ENCODE measurements at regions of chr16 and their contacts with region 1.

Region 1: GRCh38 chr16:88700636-88701482 is 5.3 kb downstream of the RNF166 start:
- DNase-seq: peak; percentile 92 to 98 (median 97)
- ATAC-seq: peak; percentile 65
- H3K4me3 ChIP-seq: peak overlapping the region; percentile 74 to 95
- H3K4me3 Mint-ChIP-seq: peak overlapping the region; percentile 90
- H3K27ac ChIP-seq: peak overlapping the region; percentile 83 to 91
- H3K27ac Mint-ChIP-seq: peak overlapping the region; percentile 98
- H3K4me1 ChIP-seq: peaks cover 56% of the 10 kb centered on the region
- H3K4me1 Mint-ChIP-seq: peaks cover 61% of the 10 kb centered on the region
- H3K27me3 ChIP-seq: no peaks in the 10 kb centered on the region
- H3K27me3 Mint-ChIP-seq: no peaks in the 10 kb centered on the region
- CTCF ChIP-seq: no peak

Region 2: DNA sequence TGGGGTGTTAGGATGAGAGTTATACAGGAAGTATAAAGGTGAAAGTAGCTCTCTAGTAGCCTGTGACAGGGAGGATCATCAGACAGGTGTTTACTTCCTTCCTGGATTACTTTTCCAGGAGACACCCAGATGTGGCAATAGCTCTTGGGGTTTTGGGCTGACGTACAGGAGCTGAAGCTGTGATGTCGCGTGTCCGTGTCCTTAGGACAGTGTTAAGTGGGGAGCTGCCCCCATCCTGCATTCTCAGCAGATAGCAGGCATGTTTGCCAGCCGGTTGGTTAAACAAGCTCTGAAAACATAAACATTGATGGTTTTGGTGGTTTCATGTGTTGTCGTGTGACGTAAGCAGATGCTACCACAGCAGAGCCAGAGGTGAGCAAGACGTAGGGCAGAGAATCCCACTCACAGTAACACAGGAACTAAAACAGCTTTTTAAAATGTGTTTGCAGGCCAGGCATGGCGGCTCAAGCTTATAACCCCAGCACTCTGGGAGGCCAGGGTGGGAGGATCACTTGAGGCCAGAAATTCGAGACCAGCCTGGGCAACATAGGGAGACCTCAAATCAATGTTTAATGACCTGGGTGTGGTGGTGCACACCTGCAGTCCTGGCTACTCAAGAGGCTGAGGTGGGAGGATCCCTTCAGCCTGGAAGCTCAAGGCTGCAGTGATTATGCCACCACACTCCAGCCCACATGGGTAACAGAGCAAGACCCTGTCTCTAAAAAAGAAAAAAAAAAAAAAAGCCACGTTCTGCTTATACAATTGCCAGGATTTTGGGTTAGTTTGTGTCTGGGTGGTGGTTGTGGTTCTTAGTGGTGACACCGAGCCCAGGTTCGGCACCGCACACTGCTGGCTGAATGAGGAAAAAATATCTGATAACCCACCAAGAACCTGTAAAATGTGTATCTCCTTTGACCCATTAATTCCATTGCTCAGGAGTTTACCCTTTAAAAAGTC is 80.7 kb before region 1 on chr16:
- CTCF ChIA-PET with region 1: no interaction called
- POLR2A ChIA-PET with region 1: interaction called, 11 read pairs
- intact Hi-C with region 1: loop called (anchors 1 kb)
- DNase-seq: peak; percentile 58 to 97 (median 76)
- ATAC-seq: peak; percentile 85
- H3K4me3 ChIP-seq: no peak overlapping the region
- H3K4me3 Mint-ChIP-seq: peak overlapping the region; percentile 36
- H3K27ac ChIP-seq: peak overlapping the region; percentile 69 to 89
- H3K27ac Mint-ChIP-seq: peak overlapping the region; percentile 99
- H3K4me1 ChIP-seq: peaks cover 28% of the 10 kb centered on the region
- H3K4me1 Mint-ChIP-seq: peaks cover 25% of the 10 kb centered on the region
- H3K27me3 ChIP-seq: no peaks in the 10 kb centered on the region
- H3K27me3 Mint-ChIP-seq: no peaks in the 10 kb centered on the region
- CTCF ChIP-seq: no peak

Region 3: GRCh38 chr16:88650749-88651275 is 50.0 kb before region 1 on chr16 and contains the start of gene CYBA:
- CTCF ChIA-PET with region 1: interaction called, 5 read pairs
- POLR2A ChIA-PET with region 1: interaction called, 7 read pairs
- intact Hi-C with region 1: loop called (anchors 1 kb)
- DNase-seq: peak; percentile 73 to 92 (median 82)
- ATAC-seq: peak; percentile 80
- H3K4me3 ChIP-seq: peak within 1 kb of the TSS; percentile 90 to 95
- H3K4me3 Mint-ChIP-seq: peak within 1 kb of the TSS; percentile 91
- H3K27ac ChIP-seq: peak within 1 kb of the TSS; percentile 91 to 94
- H3K27ac Mint-ChIP-seq: peak within 1 kb of the TSS; percentile 94
- H3K4me1 ChIP-seq: peaks cover 33% of the 10 kb centered on the region
- H3K4me1 Mint-ChIP-seq: peaks cover 21% of the 10 kb centered on the region
- H3K27me3 ChIP-seq: no peaks in the 10 kb centered on the region
- H3K27me3 Mint-ChIP-seq: no peaks in the 10 kb centered on the region
- CTCF ChIP-seq: no peak
- total RNA-seq, gene CYBA: 312 to 320 TPM